H1 (cell line): ENCODE measurements at regions of chr1 and their contacts with region 1.

Region 1: GRCh38 chr1:15803354-15803753 is 4.1 kb downstream of the UQCRHL start:
- DNase-seq: peak in 1 of 2 experiments; percentile 68
- H3K4me3 ChIP-seq: no peak overlapping the region
- H3K27ac ChIP-seq: no peak overlapping the region
- H3K4me1 ChIP-seq: peaks cover 0 to 18% (median 12%) of the 10 kb centered on the region in 4 experiments; a peak in 6 of 7 replicates
- H3K27me3 ChIP-seq: no peaks in the 10 kb centered on the region
- CTCF ChIP-seq: peak; percentile 19 to 67 (median 55)
- EP300 ChIP-seq: no peak
- POLR2A ChIP-seq: no peak
- RAD21 ChIP-seq: peak; percentile 66 to 81

Region 2: DNA sequence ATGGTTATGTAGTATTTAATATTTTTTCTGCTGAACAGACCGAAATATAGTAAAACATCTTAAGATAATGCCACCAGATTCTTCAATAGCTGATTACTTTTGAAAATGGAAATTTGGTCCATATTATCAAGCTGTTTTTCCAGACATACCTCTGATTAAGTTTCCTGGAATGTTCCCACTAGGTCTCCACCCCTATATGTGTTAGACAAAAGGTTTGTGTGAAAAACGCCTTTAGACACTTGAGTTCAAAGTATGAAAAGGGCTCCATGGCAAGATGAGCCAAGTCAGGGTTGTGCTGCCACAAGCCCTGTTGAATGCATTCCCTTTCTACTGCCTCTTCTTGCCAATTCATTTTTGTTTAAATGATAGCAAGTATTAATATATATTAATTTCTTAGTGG is 119.9 kb after region 1 on chr1:
- CTCF ChIA-PET with region 1: interaction called, 14 read pairs
- POLR2A ChIA-PET with region 1: no interaction called
- DNase-seq: no peak
- H3K4me3 ChIP-seq: no peak overlapping the region
- H3K27ac ChIP-seq: no peak overlapping the region
- H3K4me1 ChIP-seq: no peaks in the 10 kb centered on the region
- H3K27me3 ChIP-seq: no peaks in the 10 kb centered on the region
- CTCF ChIP-seq: no peak
- EP300 ChIP-seq: no peak
- POLR2A ChIP-seq: no peak
- RAD21 ChIP-seq: no peak

Region 3: DNA sequence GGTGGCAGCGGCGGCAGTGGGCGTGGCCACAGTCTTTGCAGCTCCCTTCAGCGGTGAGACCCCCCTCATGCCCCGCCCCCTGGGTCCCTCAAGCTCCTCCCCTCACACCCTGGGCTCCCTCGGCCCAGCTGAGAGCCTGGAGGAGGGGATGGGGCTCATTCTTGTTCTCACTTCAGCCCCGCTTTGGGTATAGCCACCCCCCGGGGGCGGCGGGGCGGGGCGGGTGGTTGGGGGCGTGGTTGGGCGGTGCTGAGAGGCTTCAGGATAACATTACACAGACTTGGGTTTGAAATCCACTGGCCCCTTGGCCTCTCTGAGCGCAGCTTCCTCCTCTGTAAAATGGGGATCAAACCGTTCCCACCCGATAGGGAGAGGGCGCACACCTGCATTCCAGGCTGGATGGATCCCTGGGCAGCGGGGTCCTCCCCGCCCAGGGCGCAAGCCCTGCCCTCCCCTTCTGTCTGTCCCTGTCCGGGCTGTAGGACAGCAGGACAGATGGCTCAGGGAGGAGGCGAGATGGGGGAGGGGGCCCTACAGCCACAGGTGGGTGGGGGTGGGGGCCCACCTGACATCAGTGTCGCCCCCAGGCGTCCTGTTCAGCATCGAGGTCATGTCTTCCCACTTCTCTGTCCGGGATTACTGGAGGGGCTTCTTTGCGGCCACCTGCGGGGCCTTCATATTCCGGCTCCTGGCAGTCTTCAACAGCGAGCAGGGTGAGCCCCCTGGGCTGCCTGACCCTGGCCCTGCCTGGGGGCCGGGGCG is 223.6 kb after region 1 on chr1:
- CTCF ChIA-PET with region 1: no interaction called
- POLR2A ChIA-PET with region 1: no interaction called
- DNase-seq: peak; percentile 87 to 97
- H3K4me3 ChIP-seq: peak overlapping the region in 3 of 4 experiments; percentile 30 to 54 (median 42); a peak in 6 of 8 replicates
- H3K27ac ChIP-seq: no peak overlapping the region
- H3K4me1 ChIP-seq: peaks cover 0 to 12% (median 8%) of the 10 kb centered on the region in 4 experiments; a peak in 6 of 7 replicates
- H3K27me3 ChIP-seq: peaks cover 0 to 7% (median under 1%) of the 10 kb centered on the region in 4 experiments; a peak in 3 of 7 replicates
- CTCF ChIP-seq: no peak
- EP300 ChIP-seq: no peak
- POLR2A ChIP-seq: no peak
- RAD21 ChIP-seq: no peak